Activated CD8-positive, alpha-beta T cell treated with anti-CD3 and anti-CD28 coated beads for 36 hours (primary cell): ENCODE measurements at regions of chr17 and their contacts with region 1.

Region 1: DNA sequence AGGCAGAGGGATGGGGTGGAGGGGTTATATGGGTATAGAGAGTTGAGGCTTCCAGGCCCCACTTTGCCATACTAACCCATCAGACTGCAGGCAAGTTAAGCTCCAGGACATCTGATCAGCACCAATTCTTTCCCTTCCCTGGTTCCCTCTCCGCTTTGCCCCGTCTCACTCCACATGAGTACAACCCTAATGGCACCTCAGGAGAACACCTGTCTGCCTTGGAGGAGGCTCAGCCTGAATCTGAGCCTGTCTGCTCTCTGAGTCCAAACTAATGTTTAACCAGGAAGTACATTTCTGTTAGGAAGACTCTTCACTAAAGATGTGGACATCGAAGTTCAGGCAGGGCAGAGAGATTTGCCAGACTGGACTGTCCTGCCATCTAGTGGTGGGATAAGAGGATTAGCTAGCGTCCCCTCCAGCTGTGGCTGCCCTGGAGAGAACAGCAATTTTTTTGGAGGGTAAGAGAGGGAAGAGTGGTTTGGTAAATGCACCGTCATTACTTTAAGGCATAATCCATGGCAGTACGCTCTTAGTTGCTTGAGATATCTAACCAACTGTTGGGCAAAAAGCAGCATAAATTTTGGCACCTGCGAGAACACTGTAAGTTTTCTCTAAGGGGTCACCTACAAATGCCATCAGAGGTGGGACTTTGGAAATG is 29.2 kb upstream of the LRRC75A start:
- DNase-seq: peak; percentile 76
- ATAC-seq: peak; percentile 97
- H3K4me3 Mint-ChIP-seq: no peak overlapping the region
- H3K27ac Mint-ChIP-seq: no peak overlapping the region
- H3K4me1 Mint-ChIP-seq: peaks cover 9% of the 10 kb centered on the region
- H3K27me3 Mint-ChIP-seq: peaks cover 27% of the 10 kb centered on the region
- CTCF ChIP-seq: peak; percentile 90

Region 2: DNA sequence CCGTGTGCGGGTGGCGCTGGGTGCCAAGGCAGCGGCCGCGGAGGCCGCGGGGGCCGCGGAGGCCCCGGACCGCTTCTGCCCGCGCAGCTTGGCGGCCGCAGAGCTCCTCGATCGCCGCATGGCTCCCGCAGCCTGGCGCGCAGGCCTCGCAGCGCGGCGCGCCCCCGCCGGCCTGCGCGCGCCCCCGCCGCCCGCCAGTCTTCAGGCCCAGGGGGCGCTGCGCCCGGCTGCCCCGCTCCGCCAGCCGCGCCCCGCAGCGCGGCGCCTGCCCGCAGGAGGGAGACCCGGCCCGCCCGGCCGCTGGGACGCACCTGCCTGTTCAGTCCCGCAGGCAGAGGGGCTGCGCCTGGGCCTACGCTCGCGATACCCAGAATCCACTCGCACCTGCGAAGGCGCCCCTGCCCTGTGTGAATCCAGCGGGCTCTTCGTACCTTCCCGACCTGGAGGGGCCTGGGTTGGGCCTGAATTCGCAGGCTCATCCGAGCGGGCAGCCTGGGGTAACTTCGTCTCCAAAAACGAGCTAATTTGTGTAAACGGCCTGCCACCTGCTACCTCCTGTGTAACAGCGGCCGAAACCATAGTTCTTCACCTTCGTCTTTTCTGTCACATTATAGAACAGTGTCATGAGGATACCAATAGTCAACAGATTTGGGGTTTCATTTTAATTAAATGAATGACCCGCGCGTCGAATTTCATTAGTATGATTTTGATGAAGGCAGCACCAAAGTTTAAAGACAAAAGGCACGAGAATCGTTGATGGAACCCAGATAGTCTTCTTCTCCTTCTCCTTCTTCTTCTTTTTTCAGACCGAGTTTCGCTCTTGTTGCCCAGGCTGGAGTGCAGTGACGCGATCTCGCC is 167.7 kb before region 1 on chr17 and contains the start of gene CENPV:
- CTCF ChIA-PET with region 1: interaction called, 13 read pairs
- POLR2A ChIA-PET with region 1: interaction called, 3 read pairs
- intact Hi-C with region 1: no loop called
- DNase-seq: peak; percentile 66
- ATAC-seq: peak; percentile 82
- H3K4me3 Mint-ChIP-seq: peak within 1 kb of the TSS; percentile 97
- H3K27ac Mint-ChIP-seq: peak within 1 kb of the TSS; percentile 93
- H3K4me1 Mint-ChIP-seq: peaks cover 18% of the 10 kb centered on the region
- H3K27me3 Mint-ChIP-seq: no peaks in the 10 kb centered on the region
- CTCF ChIP-seq: peak; percentile 9
- total RNA-seq, gene CENPV: 139 to 142 TPM

Region 3: DNA sequence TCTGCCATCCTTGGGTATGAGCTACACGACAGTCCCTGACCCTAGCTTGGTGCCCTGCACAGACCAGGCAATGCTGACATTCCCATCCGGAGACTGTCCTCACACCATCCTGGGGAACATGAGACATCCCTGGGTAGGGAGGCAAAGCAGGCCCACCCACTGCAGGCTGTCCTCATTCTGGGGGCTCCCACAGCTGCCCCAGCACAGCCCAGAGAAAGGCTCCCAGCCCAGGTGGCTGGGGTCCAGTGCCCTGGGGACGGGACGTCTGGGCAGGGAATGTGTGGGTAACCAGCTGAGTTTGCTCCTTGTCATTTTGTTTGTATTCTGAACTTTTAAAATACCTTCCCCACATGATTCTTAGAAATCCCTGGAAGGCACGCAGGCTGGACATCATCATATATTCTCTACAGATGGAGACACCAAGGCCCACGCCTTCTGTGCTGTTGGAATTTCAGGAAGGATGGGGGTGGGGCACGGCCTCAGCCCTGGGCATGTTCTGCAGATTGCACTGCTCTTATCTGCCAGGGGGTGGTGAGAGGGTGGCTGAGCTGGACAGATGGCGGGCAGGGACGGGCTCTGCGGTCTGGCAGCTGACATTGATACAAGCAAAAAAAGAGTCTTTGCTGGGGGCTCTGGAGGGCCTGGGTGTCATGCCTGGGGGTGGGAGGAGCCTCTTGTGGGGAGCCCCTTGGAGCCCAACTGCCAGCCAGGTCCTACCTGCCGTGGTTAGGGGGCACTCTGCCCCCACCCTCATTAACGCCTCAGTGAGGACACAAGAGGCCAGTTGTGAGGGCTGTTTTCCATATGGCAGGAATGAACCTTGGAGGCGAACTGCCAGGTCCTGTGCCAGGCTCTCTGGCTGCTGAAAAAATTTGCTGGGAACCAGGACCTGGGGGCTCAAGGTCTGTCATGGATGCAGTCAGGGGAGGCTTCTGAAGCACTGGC is 57.6 kb before region 1 on chr17:
- CTCF ChIA-PET with region 1: interaction called, 11 read pairs
- POLR2A ChIA-PET with region 1: no interaction called
- intact Hi-C with region 1: no loop called
- DNase-seq: no peak
- ATAC-seq: no peak
- H3K4me3 Mint-ChIP-seq: no peak overlapping the region
- H3K27ac Mint-ChIP-seq: no peak overlapping the region
- H3K4me1 Mint-ChIP-seq: no peaks in the 10 kb centered on the region
- H3K27me3 Mint-ChIP-seq: no peaks in the 10 kb centered on the region
- CTCF ChIP-seq: no peak

Region 4: GRCh38 chr17:16491131-16491702 is 30.0 kb before region 1 on chr17:
- CTCF ChIA-PET with region 1: interaction called, 10 read pairs
- POLR2A ChIA-PET with region 1: interaction called, 3 read pairs
- intact Hi-C with region 1: no loop called
- DNase-seq: peak; percentile 53
- ATAC-seq: peak; percentile 61
- H3K4me3 Mint-ChIP-seq: peak overlapping the region; percentile 70
- H3K27ac Mint-ChIP-seq: no peak overlapping the region
- H3K4me1 Mint-ChIP-seq: peaks cover 13% of the 10 kb centered on the region
- H3K27me3 Mint-ChIP-seq: peaks cover 4% of the 10 kb centered on the region
- CTCF ChIP-seq: no peak